Dendritic cell treated with granulocyte-macrophage colony-stimulating factor and Interleukin-4, amounts not matched to agents 40 ng/mL and 50 ng/mL, for 4 days (primary cell): ENCODE measurements at regions of chr5 and their contacts with region 1.

Region 1: DNA sequence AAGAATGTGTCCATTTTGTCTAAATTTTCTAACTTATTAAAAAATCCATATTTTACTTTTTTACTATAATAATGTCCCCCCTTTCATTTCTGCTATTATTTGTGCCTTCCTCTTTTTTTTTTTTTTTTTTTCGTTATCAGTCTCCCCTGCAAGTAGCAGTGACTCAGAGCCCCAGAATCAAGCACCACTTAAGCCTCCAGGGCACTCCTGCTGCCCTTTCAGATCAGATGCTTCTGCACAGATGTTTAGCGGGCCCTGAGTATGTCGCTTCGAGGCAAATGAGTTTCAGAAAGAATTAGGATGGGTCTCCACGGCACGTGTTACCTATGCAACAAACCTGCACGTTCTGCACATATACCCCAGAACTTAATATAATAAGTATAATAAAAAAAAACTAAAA is 11.7 kb downstream of the MED7 start:
- H3K4me3 Mint-ChIP-seq: no peak overlapping the region
- H3K27ac Mint-ChIP-seq: peak overlapping the region; percentile 80
- H3K4me1 Mint-ChIP-seq: peaks cover 22% of the 10 kb centered on the region
- H3K27me3 Mint-ChIP-seq: peaks cover 2% of the 10 kb centered on the region

Region 2: DNA sequence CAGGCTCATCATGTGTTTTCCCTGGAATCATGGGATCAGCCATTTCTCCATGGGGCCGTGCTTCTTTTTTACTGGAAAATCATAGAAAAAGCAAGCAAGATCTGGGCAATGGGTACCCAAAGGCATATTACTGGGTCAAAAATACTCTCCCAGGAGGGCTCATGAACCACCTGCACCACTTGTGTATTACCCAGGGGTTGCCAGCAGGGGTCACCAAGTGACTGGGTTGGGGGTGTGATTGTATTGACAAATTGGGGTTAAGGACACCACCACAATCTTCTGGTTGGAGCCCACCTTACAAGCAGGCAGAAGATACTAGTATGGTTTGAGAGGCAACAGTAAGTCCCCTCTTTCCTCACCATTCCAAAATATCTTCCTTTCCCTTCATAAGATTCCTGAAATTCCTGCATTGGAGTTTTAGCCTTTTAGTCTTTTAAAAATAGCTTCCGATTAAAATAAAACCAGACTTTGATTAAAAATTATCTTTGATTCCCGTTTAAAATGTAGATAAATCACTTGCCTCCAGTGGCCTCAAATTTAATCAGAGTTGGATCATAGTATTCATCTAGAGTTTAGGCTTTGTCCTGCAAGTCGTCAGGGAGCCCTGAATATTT is 1514.0 kb before region 1 on chr5:
- intact Hi-C with region 1: loop called (anchors 5 kb)
- H3K4me3 Mint-ChIP-seq: no peak overlapping the region
- H3K27ac Mint-ChIP-seq: no peak overlapping the region
- H3K4me1 Mint-ChIP-seq: no peaks in the 10 kb centered on the region
- H3K27me3 Mint-ChIP-seq: peaks cover 2% of the 10 kb centered on the region

Region 3: GRCh38 chr5:155943516-155944407 is 1187.2 kb before region 1 on chr5:
- intact Hi-C with region 1: loop called (anchors 10 kb)
- H3K4me3 Mint-ChIP-seq: no peak overlapping the region
- H3K27ac Mint-ChIP-seq: no peak overlapping the region
- H3K4me1 Mint-ChIP-seq: no peaks in the 10 kb centered on the region
- H3K27me3 Mint-ChIP-seq: no peaks in the 10 kb centered on the region

Region 4: GRCh38 chr5:157100140-157100679 is 30.7 kb before region 1 on chr5:
- intact Hi-C with region 1: loop called (anchors 5 kb)
- H3K4me3 Mint-ChIP-seq: no peak overlapping the region
- H3K27ac Mint-ChIP-seq: peak overlapping the region; percentile 39
- H3K4me1 Mint-ChIP-seq: peaks cover 31% of the 10 kb centered on the region
- H3K27me3 Mint-ChIP-seq: no peaks in the 10 kb centered on the region

Region 5: GRCh38 chr5:157106630-157107461 is 24.1 kb before region 1 on chr5:
- intact Hi-C with region 1: loop called (anchors 2 kb)
- H3K4me3 Mint-ChIP-seq: peak overlapping the region; percentile 92
- H3K27ac Mint-ChIP-seq: peak overlapping the region; percentile 96
- H3K4me1 Mint-ChIP-seq: peaks cover 41% of the 10 kb centered on the region
- H3K27me3 Mint-ChIP-seq: no peaks in the 10 kb centered on the region